ENCODE measurements at regions of chr6 and their contacts with region 1.

Region 1: GRCh38 chr6:127516666-127517273 is 2.4 kb downstream of the MTCL3 start:
- DNase-seq: no peak
- H3K4me3 ChIP-seq: peak overlapping the region; percentile 71
- H3K27ac ChIP-seq: peak overlapping the region; percentile 13
- H3K27me3 ChIP-seq: no peaks in the 10 kb centered on the region
- CTCF ChIP-seq: peak; percentile 74

Region 2: GRCh38 chr6:127302728-127303660 is 213.8 kb before region 1 on chr6:
- CTCF ChIA-PET with region 1: interaction called, 47 read pairs
- POLR2A ChIA-PET with region 1: no interaction called
- DNase-seq: no peak
- H3K4me3 ChIP-seq: no peak overlapping the region
- H3K27ac ChIP-seq: no peak overlapping the region
- H3K27me3 ChIP-seq: no peaks in the 10 kb centered on the region
- CTCF ChIP-seq: peak; percentile 74

Region 3: DNA sequence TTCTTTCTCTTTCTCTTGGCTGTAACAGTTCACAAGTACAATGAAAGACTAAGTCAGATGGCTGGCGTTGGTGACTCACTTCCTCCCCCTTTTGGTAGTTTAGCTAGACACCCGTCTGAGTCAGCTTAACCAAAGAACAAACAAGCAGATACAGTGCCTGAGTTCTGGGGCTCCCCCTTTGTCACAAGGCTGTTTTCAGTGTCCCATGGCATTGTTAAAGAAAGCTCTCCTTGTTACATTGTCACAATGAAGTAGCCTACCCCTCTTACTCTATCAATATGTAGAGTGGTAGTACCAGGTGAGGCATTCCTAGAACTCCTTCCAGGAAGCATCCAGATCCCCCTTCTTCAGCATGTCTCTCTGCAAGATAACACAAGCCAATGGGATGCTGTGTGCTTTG is 96.2 kb before region 1 on chr6:
- CTCF ChIA-PET with region 1: interaction called, 11 read pairs
- POLR2A ChIA-PET with region 1: no interaction called
- DNase-seq: peak; percentile 76
- H3K4me3 ChIP-seq: no peak overlapping the region
- H3K27ac ChIP-seq: no peak overlapping the region
- H3K27me3 ChIP-seq: no peaks in the 10 kb centered on the region
- CTCF ChIP-seq: peak; percentile 46

Region 4: GRCh38 chr6:127471379-127472255 is 45.2 kb before region 1 on chr6:
- CTCF ChIA-PET with region 1: interaction called, 30 read pairs
- POLR2A ChIA-PET with region 1: no interaction called
- DNase-seq: no peak
- H3K4me3 ChIP-seq: no peak overlapping the region
- H3K27ac ChIP-seq: no peak overlapping the region
- H3K27me3 ChIP-seq: no peaks in the 10 kb centered on the region
- CTCF ChIP-seq: no peak

Region 5: DNA sequence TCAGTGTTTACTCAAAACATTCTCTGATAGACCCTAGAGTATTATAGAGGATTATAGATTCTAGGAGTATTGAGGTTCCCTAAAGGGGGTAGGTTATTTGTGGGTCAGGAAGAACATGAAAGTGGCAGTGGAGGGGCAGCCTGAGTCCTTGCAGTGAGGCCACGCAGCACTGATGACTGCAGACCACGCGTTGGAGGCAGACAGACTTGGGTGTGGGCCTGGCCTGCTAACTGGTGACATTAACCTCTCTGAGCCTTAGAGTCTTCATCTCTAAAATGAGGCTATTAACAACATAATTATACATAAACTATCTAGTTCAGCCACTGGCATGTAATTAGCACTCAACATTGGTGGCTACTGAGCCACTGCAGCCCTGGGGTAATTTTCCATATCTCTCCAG is 13.7 kb before region 1 on chr6:
- CTCF ChIA-PET with region 1: interaction called, 26 read pairs
- POLR2A ChIA-PET with region 1: no interaction called
- DNase-seq: no peak
- H3K4me3 ChIP-seq: no peak overlapping the region
- H3K27ac ChIP-seq: no peak overlapping the region
- H3K27me3 ChIP-seq: no peaks in the 10 kb centered on the region
- CTCF ChIP-seq: no peak

Region 6: GRCh38 chr6:127855542-127856159 is 338.9 kb after region 1 on chr6:
- CTCF ChIA-PET with region 1: no interaction called
- POLR2A ChIA-PET with region 1: no interaction called
- DNase-seq: no peak
- H3K4me3 ChIP-seq: no peak overlapping the region
- H3K27ac ChIP-seq: no peak overlapping the region
- H3K27me3 ChIP-seq: no peaks in the 10 kb centered on the region
- CTCF ChIP-seq: peak; percentile 73

Measured in AG04450 (cell line).